ENCODE measurements at regions of chr6 and their contacts with region 1.

Region 1: GRCh38 chr6:134063966-134064445 is 11.6 kb upstream of the SLC2A12 start:
- DNase-seq: peak; percentile 67
- H3K4me3 Mint-ChIP-seq: no peak overlapping the region
- H3K27ac Mint-ChIP-seq: no peak overlapping the region
- H3K4me1 Mint-ChIP-seq: no peaks in the 10 kb centered on the region
- H3K27me3 Mint-ChIP-seq: no peaks in the 10 kb centered on the region

Region 2: GRCh38 chr6:133837801-133838349 is 226.1 kb before region 1 on chr6:
- CTCF ChIA-PET with region 1: no interaction called
- POLR2A ChIA-PET with region 1: no interaction called
- intact Hi-C with region 1: loop called (anchors 10 kb)
- DNase-seq: peak; percentile 71
- H3K4me3 Mint-ChIP-seq: peak overlapping the region; percentile 60
- H3K27ac Mint-ChIP-seq: no peak overlapping the region
- H3K4me1 Mint-ChIP-seq: peaks cover 3% of the 10 kb centered on the region
- H3K27me3 Mint-ChIP-seq: peaks cover 15% of the 10 kb centered on the region

Region 3: DNA sequence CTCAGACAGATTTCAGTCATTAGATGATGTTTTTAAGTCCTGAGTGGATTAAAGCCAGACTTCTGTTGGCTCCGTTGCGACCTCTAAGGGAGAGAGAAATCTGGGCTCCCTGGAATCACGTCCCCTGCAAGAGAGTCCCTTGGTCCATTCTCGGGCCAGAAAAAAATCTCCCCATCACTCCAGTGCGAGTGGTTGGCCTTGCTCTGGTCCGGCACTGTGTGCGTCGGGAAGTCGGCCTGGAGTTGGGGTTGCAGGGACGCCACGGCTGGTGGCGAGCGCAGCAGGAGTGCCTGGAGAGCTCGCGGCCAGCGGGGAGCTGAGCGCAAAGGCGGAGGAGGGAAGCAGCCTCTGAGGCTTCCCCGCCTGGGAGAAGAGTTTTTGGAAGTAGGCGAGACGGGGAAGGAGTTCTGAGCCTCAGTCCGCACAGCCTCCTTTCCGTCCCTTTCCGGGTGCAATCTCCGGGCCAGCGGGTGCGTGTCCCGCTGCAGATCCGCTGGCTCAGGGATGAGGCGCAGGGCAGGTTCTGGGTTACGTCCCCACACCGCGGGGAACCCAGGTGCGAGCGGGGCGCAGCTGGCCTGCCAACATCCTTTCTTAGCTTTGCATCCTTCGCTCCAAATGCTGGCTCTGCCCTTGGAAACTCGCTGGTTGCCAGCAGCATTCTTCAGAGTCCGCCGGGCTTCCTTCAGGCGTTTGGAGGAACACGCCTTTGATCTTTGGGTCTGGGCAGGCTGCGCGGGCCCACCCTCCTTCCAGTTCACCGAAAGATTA is 168.2 kb before region 1 on chr6:
- CTCF ChIA-PET with region 1: no interaction called
- POLR2A ChIA-PET with region 1: no interaction called
- intact Hi-C with region 1: no loop called
- DNase-seq: no peak
- H3K4me3 Mint-ChIP-seq: no peak overlapping the region
- H3K27ac Mint-ChIP-seq: no peak overlapping the region
- H3K4me1 Mint-ChIP-seq: peaks cover 18% of the 10 kb centered on the region
- H3K27me3 Mint-ChIP-seq: peaks cover 69% of the 10 kb centered on the region

Region 4: DNA sequence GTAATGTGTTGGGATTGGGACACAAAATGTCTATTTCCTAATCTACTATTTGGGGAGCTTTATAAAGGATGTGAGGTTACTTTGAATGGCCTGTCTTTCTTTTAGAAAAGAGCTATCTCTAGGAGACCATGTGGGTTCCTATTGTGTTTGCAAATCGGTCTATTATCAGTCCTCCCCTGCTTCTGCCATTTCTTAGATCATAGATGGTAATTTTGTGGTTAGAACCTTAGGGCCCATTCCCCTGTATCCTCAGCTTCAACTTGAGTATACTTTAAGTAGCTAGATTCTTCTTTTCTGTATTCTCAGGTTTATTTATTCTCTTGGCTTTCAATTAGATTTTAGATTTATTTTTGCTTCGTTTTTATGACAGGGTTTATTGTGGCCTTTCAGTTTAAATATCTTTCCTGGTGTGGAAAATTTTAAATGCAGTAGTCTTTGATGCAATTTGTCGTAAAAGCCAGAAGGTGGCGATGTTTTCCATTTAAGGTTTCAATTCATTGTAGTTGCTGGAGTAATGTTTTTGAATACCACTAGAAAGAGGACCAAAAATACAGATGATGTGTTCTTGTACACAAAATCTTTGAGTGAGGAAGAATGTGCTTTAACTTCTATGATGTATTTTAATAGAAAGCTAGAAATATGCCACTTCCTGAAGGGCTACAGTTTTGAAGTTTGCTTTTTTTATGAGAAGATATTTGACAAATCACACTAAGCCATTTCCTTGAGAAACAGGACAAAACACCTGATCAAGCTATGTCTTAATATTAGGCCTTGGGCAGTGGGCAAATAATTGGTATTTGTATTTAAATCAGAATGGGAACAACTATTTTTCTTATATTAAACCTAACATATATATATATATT is 90.7 kb before region 1 on chr6:
- CTCF ChIA-PET with region 1: interaction called, 131 read pairs
- POLR2A ChIA-PET with region 1: no interaction called
- intact Hi-C with region 1: loop called (anchors 1 kb)
- DNase-seq: no peak
- H3K4me3 Mint-ChIP-seq: no peak overlapping the region
- H3K27ac Mint-ChIP-seq: no peak overlapping the region
- H3K4me1 Mint-ChIP-seq: peaks cover 30% of the 10 kb centered on the region
- H3K27me3 Mint-ChIP-seq: no peaks in the 10 kb centered on the region

Region 5: GRCh38 chr6:134074151-134075055 is 10.4 kb after region 1 on chr6:
- CTCF ChIA-PET with region 1: interaction called, 19 read pairs
- POLR2A ChIA-PET with region 1: no interaction called
- intact Hi-C with region 1: no loop called
- DNase-seq: no peak
- H3K4me3 Mint-ChIP-seq: no peak overlapping the region
- H3K27ac Mint-ChIP-seq: no peak overlapping the region
- H3K4me1 Mint-ChIP-seq: no peaks in the 10 kb centered on the region
- H3K27me3 Mint-ChIP-seq: peaks cover under 1% of the 10 kb centered on the region

Region 6: DNA sequence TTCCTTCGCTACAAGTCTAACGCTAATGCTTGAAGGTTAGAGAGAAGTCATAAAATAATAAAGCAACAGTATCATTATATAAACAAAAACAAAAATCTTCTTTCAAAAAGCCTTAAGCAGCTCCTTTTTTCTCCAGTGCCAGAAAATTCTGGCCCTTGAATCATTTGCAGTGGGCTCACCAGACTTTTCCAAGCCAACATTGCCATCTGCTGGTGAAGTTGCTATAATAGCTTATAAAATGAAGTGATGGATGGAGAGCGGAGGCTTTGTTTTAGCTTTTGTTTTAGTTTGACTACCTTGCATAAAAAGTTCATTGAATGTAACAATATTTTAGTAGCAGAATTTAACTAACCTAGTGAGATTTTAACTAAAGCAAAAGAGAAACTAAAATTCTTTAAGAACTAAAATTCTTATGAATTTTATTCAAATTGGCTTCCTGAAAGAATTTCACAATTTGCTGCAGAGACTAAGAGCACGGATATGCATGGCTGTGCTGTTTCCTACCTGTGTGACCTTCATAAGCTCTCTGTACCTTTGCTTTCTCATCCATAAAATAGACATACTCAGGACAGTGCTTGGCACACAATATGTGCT is 33.2 kb after region 1 on chr6:
- CTCF ChIA-PET with region 1: interaction called, 35 read pairs
- POLR2A ChIA-PET with region 1: no interaction called
- intact Hi-C with region 1: loop called (anchors 1 kb)
- DNase-seq: peak; percentile 67
- H3K4me3 Mint-ChIP-seq: no peak overlapping the region
- H3K27ac Mint-ChIP-seq: no peak overlapping the region
- H3K4me1 Mint-ChIP-seq: no peaks in the 10 kb centered on the region
- H3K27me3 Mint-ChIP-seq: peaks cover 11% of the 10 kb centered on the region

Measured in activated CD4-positive, alpha-beta memory T cell treated with anti-CD3 and anti-CD28 coated beads for 36 hours (primary cell).